Endothelial cell of umbilical vein (primary cell): ENCODE measurements at regions of chrX and their contacts with region 1.

Region 1: DNA sequence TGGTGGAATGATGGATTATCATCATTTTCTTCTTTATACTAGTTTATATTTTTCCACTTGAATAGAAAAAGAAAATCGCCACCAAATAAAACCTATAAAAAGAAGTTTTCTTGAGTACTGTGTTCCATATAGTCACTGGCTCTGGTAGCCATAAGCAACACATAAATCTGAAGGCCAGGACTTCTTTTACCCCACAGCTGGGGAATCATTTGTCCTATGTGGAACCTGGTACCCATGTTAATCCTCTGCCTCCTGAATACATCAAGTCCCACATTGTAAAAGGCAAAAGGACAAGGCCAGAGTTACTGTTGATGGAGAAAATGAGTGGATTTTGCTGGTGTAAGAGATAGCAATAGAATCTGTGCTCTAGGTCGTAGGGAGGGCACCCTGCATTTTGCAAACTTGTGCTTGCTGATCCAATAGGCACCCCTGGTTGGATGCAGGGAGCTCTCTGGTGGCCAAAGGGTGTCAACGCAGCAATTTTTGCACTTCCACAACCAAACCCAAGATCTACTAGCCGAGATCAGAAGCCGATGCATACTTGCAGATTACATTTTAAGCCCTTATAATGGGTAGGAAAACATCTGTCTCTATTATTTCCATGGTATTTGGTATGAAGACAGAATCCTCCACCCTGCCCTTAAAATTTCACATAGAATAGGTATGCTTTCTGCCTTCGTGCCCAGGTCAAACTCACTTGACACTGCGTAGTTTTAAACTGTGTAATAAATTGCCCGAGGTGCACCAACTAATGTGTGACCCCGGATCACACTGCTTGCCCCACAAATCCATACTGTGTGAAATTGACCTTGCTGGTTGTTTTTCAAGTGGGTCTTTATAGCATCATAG is 146.2 kb upstream of the SCML1 start:
- DNase-seq: peak; percentile 77
- H3K4me3 ChIP-seq: peak overlapping the region in 1 of 3 experiments; percentile 46
- H3K27ac ChIP-seq: peak overlapping the region; percentile 59
- H3K4me1 ChIP-seq: peaks cover 34% of the 10 kb centered on the region
- H3K27me3 ChIP-seq: no peaks in the 10 kb centered on the region
- CTCF ChIP-seq: peak; percentile 58 to 63
- POLR2A ChIP-seq: no peak

Region 2: GRCh38 chrX:17242470-17242869 is 348.6 kb before region 1 on chrX:
- CTCF ChIA-PET with region 1: interaction called, 39 read pairs
- POLR2A ChIA-PET with region 1: no interaction called
- dilution Hi-C with region 1: no loop called
- intact Hi-C with region 1: loop called (anchors 1 kb)
- DNase-seq: peak; percentile 62
- H3K4me3 ChIP-seq: no peak overlapping the region
- H3K27ac ChIP-seq: no peak overlapping the region
- H3K4me1 ChIP-seq: no peaks in the 10 kb centered on the region
- H3K27me3 ChIP-seq: no peaks in the 10 kb centered on the region
- CTCF ChIP-seq: peak; percentile 36
- POLR2A ChIP-seq: no peak

Region 3: DNA sequence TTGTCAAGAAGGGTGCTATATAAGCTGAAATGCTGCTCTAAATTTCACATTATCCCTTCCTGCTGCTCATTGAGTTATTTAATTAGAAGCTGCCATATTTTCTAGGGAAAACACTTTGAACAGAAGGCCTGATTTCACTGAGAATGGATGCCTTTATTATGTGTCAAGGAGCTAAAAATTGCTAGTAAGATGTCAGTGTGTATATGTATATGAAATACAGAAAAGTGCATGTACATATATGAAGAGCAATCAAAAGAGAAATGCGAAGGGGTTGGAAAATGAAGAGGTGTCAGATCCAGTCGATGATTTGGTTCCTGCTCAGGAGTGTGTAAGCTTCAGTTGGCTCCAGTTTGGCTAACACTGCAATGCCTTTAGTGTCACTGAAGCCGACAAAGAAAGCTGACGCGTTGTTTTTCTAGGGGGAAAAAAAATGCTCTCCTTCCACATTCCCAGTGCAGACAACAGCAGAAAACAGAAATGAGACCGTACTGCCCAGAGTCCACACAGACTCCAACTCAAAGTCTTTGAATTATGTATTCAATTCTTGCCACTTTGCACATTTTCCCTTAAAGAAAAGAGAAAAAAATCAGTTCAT is 61.9 kb before region 1 on chrX:
- CTCF ChIA-PET with region 1: interaction called, 36 read pairs
- POLR2A ChIA-PET with region 1: no interaction called
- dilution Hi-C with region 1: no loop called
- intact Hi-C with region 1: no loop called
- DNase-seq: no peak
- H3K4me3 ChIP-seq: no peak overlapping the region
- H3K27ac ChIP-seq: no peak overlapping the region
- H3K4me1 ChIP-seq: no peaks in the 10 kb centered on the region
- H3K27me3 ChIP-seq: peaks cover 0 to 2% of the 10 kb centered on the region in 2 experiments
- CTCF ChIP-seq: no peak
- POLR2A ChIP-seq: no peak

Region 4: GRCh38 chrX:17547658-17548057 is 43.5 kb before region 1 on chrX:
- CTCF ChIA-PET with region 1: interaction called, 7 read pairs
- POLR2A ChIA-PET with region 1: no interaction called
- dilution Hi-C with region 1: no loop called
- intact Hi-C with region 1: loop called (anchors 1 kb)
- DNase-seq: peak; percentile 90
- H3K4me3 ChIP-seq: no peak overlapping the region
- H3K27ac ChIP-seq: no peak overlapping the region
- H3K4me1 ChIP-seq: peaks cover 10% of the 10 kb centered on the region
- H3K27me3 ChIP-seq: no peaks in the 10 kb centered on the region
- CTCF ChIP-seq: no peak
- POLR2A ChIP-seq: no peak

Region 5: GRCh38 chrX:17580539-17581152 is 10.5 kb before region 1 on chrX:
- CTCF ChIA-PET with region 1: interaction called, 10 read pairs
- POLR2A ChIA-PET with region 1: no interaction called
- dilution Hi-C with region 1: no loop called
- intact Hi-C with region 1: no loop called
- DNase-seq: peak; percentile 39
- H3K4me3 ChIP-seq: no peak overlapping the region
- H3K27ac ChIP-seq: no peak overlapping the region
- H3K4me1 ChIP-seq: peaks cover 7% of the 10 kb centered on the region
- H3K27me3 ChIP-seq: peaks cover 10 to 18% of the 10 kb centered on the region in 2 experiments
- CTCF ChIP-seq: no peak
- POLR2A ChIP-seq: no peak

Region 6: GRCh38 chrX:17689971-17690409 is 98.9 kb after region 1 on chrX:
- CTCF ChIA-PET with region 1: interaction called, 19 read pairs
- POLR2A ChIA-PET with region 1: no interaction called
- dilution Hi-C with region 1: no loop called
- intact Hi-C with region 1: loop called (anchors 1 kb)
- DNase-seq: peak; percentile 66
- H3K4me3 ChIP-seq: no peak overlapping the region
- H3K27ac ChIP-seq: no peak overlapping the region
- H3K4me1 ChIP-seq: peaks cover 2% of the 10 kb centered on the region
- H3K27me3 ChIP-seq: no peaks in the 10 kb centered on the region
- CTCF ChIP-seq: peak; percentile 38 to 49
- POLR2A ChIP-seq: no peak

Region 7: DNA sequence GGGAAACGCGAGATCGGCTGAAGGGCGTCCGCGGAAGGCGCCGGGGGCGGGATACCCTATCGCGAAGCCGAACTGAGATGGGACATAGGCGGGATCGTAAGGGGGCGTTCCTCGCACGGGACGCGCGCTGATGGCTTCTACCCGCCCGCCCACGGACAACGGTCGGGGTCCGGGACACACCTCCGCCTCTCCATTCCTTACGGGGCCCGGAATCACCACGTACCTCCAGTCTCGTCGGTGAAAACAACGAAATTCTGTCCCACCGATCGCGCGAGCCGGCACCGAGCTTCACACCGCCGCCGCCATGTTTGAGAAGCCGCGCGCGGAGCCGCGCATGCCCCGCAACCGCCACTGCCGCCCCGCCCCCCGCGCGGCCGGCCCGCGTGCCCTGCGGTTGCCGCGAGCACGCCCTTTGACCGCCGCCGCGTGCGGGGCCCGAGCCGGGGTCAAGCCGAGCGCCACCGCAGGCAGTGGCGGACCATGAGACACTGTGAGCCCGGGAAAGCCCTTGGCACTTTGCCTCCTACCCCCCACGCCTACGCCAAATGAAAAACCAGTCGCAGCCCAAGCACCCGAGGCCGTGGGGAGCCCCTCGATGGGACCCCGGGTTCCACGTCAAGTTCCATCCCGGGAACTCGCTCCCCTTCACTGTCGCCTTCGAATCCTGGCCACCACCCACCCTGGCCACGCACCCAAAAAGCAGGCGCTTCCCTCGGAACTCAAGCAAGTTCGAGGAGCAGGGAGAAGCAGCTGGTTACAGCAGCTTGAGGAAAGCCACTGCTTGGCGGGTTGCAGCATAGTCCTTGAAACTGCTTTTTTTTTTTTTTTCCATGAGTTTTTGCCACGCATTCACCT is 763.5 kb after region 1 on chrX and contains the start of gene SCML2:
- CTCF ChIA-PET with region 1: no interaction called
- POLR2A ChIA-PET with region 1: no interaction called
- dilution Hi-C with region 1: no loop called
- intact Hi-C with region 1: loop called (anchors 10 kb)
- DNase-seq: peak; percentile 26
- H3K4me3 ChIP-seq: peak within 1 kb of the TSS; percentile 31 to 62 (median 56)
- H3K27ac ChIP-seq: no peak within 1 kb of the TSS
- H3K4me1 ChIP-seq: peaks cover 8% of the 10 kb centered on the region
- H3K27me3 ChIP-seq: peaks cover 6 to 17% of the 10 kb centered on the region in 2 experiments
- CTCF ChIP-seq: no peak
- POLR2A ChIP-seq: no peak
- total RNA-seq, gene SCML2: 0.69 and 2.7 TPM in 2 replicates